ENCODE measurements at regions of chr1 and their contacts with region 1.

Region 1: DNA sequence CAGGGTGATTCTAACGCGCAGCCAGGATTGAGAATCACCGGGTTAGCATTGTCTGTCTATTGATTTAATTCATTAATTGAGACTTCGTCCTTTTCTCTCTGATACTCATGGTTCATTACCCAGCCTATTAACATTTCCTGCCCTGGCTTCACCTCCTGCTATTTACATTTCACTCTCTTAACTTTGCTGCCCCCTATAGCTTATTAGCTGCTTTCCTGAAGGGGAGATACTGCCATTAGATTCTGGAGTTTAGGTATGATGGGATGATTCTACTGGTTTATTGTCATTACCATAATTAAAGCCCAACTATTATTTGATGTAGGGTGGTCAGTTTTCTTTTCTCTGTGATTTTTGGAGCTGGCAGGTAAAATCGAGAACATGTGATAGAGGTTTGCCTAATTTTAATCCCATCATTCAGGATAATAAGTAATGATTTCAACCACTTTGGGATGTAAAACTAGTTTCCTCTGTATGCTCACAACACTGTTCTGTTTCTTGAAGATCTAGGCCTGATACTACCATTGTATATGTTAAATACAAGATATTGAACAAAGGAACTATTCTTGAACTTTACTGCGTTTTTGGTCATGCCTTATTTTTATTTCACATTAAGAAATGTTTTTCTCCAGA is 6.4 kb downstream of the PPP2R5A start:
- DNase-seq: peak in 2 of 9 experiments; percentile 71 to 81
- ATAC-seq: peak; percentile 73
- H3K4me3 ChIP-seq: no peak overlapping the region
- H3K4me3 Mint-ChIP-seq: peak overlapping the region; percentile 38
- H3K27ac ChIP-seq: no peak overlapping the region
- H3K27ac Mint-ChIP-seq: peak overlapping the region; percentile 16
- H3K4me1 ChIP-seq: peaks cover 63% of the 10 kb centered on the region
- H3K4me1 Mint-ChIP-seq: peaks cover 87% of the 10 kb centered on the region
- H3K27me3 ChIP-seq: no peaks in the 10 kb centered on the region
- H3K27me3 Mint-ChIP-seq: no peaks in the 10 kb centered on the region
- CTCF ChIP-seq: peak; percentile 73

Region 2: GRCh38 chr1:212062832-212063438 is 228.7 kb before region 1 on chr1:
- CTCF ChIA-PET with region 1: interaction called, 16 read pairs
- POLR2A ChIA-PET with region 1: interaction called, 3 read pairs
- intact Hi-C with region 1: loop called (anchors 2 kb)
- DNase-seq: peak in 2 of 9 experiments; percentile 39 to 59
- ATAC-seq: peak; percentile 62
- H3K4me3 ChIP-seq: no peak overlapping the region
- H3K4me3 Mint-ChIP-seq: no peak overlapping the region
- H3K27ac ChIP-seq: no peak overlapping the region
- H3K27ac Mint-ChIP-seq: no peak overlapping the region
- H3K4me1 ChIP-seq: no peaks in the 10 kb centered on the region
- H3K4me1 Mint-ChIP-seq: no peaks in the 10 kb centered on the region
- H3K27me3 ChIP-seq: no peaks in the 10 kb centered on the region
- H3K27me3 Mint-ChIP-seq: no peaks in the 10 kb centered on the region
- CTCF ChIP-seq: peak; percentile 74

Region 3: GRCh38 chr1:212328248-212328647 is 36.6 kb after region 1 on chr1:
- CTCF ChIA-PET with region 1: no interaction called
- POLR2A ChIA-PET with region 1: no interaction called
- intact Hi-C with region 1: loop called in 1 of 2 experiments (anchors 5 kb)
- DNase-seq: no peak
- ATAC-seq: no peak
- H3K4me3 ChIP-seq: no peak overlapping the region
- H3K4me3 Mint-ChIP-seq: no peak overlapping the region
- H3K27ac ChIP-seq: no peak overlapping the region
- H3K27ac Mint-ChIP-seq: no peak overlapping the region
- H3K4me1 ChIP-seq: peaks cover 7% of the 10 kb centered on the region
- H3K4me1 Mint-ChIP-seq: peaks cover 35% of the 10 kb centered on the region
- H3K27me3 ChIP-seq: no peaks in the 10 kb centered on the region
- H3K27me3 Mint-ChIP-seq: no peaks in the 10 kb centered on the region
- CTCF ChIP-seq: no peak

Measured in CD8-positive, alpha-beta T cell (primary cell).